B cell (primary cell): ENCODE measurements at regions of chr16 and their contacts with region 1.

Region 1: DNA sequence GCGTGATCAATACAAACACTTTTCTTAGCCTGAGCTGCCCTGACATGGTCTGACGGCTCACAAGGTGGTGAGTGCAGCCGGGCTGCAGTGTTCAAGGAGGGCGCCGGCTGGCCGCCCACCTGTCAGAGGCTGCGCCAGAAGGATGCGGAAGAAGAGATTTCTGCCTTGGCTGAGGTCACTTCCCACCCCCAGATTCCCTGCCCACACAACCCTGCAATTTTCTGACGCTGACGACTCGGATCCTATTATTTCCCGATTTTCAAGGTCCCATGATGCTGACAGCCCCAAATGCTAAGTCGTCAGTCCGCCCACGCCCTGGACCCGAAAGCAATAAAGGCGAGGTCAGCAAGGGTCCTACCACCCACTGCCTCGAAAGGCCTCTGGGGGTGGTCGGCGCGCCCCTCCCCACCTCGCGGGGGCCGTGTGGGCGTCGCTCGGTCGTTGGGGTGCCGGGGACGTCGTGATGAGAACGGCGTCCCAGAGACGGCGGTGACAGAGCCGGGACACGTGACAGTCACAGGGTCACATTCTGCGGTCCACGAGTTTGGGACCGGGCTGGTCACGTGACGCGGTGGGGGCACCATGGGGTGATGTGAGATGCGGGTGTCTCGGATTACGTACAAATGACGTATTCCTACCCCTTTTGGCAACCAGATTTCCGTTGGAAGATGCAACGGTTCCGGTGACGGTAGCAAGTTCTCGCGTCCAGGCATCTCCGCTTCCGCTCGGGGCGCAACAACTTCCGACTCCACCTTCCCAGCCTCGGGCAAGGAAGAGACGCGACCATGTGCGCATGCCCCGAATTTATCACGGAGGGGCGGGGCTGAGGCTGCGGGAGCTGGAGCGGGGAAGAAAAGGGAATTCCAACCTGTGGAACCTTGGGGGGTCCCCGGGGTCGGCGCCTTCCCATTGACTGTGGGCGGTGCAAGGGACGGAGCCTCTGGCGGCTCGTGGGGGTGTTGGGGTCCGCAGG is at the start of gene STX4:
- DNase-seq: peak; percentile 100
- ATAC-seq: peak; percentile 76
- H3K4me3 ChIP-seq: peak within 1 kb of the TSS; percentile 76 to 99 (median 90)
- H3K4me3 Mint-ChIP-seq: peak within 1 kb of the TSS; percentile 95
- H3K27ac ChIP-seq: peak within 1 kb of the TSS; percentile 99 to 100
- H3K27ac Mint-ChIP-seq: peak within 1 kb of the TSS; percentile 99
- H3K4me1 ChIP-seq: peaks cover 8 to 16% of the 10 kb centered on the region in 2 donors
- H3K4me1 Mint-ChIP-seq: peaks cover 21% of the 10 kb centered on the region
- H3K27me3 ChIP-seq: no peaks in the 10 kb centered on the region
- H3K27me3 Mint-ChIP-seq: no peaks in the 10 kb centered on the region
- CTCF ChIP-seq: no peak
- total RNA-seq, gene STX4: 111 and 120 TPM in 2 replicates

Region 2: GRCh38 chr16:30761928-30762810 is 270.9 kb before region 1 on chr16 and contains the starts of genes CFAP119 and RNF40:
- CTCF ChIA-PET with region 1: no interaction called
- POLR2A ChIA-PET with region 1: no interaction called
- intact Hi-C with region 1: loop called (anchors 5 kb)
- DNase-seq: peak; percentile 95
- ATAC-seq: peak; percentile 92
- H3K4me3 ChIP-seq: peak within 1 kb of the TSS; percentile 82 to 93 (median 90)
- H3K4me3 Mint-ChIP-seq: peak within 1 kb of the TSS; percentile 98
- H3K27ac ChIP-seq: peak within 1 kb of the TSS; percentile 57 to 91
- H3K27ac Mint-ChIP-seq: peak within 1 kb of the TSS; percentile 95
- H3K4me1 ChIP-seq: peaks cover 24 to 37% of the 10 kb centered on the region in 2 donors
- H3K4me1 Mint-ChIP-seq: peaks cover 36% of the 10 kb centered on the region
- H3K27me3 ChIP-seq: no peaks in the 10 kb centered on the region
- H3K27me3 Mint-ChIP-seq: no peaks in the 10 kb centered on the region
- CTCF ChIP-seq: no peak
- total RNA-seq, gene CFAP119: 9.3 and 11.7 TPM in 2 replicates
- total RNA-seq, gene RNF40: 120 and 121 TPM in 2 replicates

Region 3: DNA sequence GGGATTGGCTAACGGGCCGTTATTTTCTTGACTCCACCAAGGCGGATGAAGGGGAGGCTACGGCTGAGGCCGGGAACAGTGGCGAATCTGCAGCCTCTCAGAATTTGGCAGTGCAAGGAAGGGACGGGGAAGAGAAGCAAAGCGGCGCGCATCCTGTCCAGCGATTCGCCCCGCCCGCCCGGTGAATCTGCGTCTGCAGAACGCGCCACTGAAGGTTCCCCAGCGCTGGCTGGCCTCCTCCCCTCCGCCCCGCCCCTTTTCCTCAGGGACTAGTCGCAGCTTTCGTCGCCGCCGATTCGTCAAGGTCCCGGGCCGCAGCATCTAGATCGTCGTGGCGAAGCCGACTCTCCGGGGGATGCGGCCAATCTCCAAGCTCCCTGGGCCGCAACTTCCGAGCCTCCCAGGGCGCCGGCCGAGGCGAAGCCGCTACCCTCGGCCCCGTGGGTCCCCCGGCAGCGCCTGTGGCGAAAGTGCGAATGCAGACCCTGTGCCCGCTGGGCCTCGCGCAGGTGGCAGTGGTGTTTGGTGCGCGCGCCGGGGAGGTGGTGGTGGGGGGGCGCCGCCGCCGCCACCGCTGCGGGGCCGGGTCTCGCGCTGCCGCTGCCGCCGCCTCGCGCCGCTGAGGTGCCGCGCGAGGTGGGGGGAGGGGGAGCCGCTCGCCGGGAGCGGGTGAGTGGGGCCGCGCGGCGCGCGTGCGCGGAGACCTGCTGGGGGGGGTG is 75.4 kb before region 1 on chr16 and contains the start of gene SETD1A:
- CTCF ChIA-PET with region 1: no interaction called
- POLR2A ChIA-PET with region 1: no interaction called
- intact Hi-C with region 1: loop called (anchors 1 kb)
- DNase-seq: peak; percentile 99
- ATAC-seq: peak; percentile 83
- H3K4me3 ChIP-seq: peak within 1 kb of the TSS; percentile 85 to 99 (median 95)
- H3K4me3 Mint-ChIP-seq: peak within 1 kb of the TSS; percentile 97
- H3K27ac ChIP-seq: peak within 1 kb of the TSS; percentile 92 to 96
- H3K27ac Mint-ChIP-seq: peak within 1 kb of the TSS; percentile 99
- H3K4me1 ChIP-seq: peaks cover 15 to 25% of the 10 kb centered on the region in 2 donors
- H3K4me1 Mint-ChIP-seq: peaks cover 40% of the 10 kb centered on the region
- H3K27me3 ChIP-seq: no peaks in the 10 kb centered on the region
- H3K27me3 Mint-ChIP-seq: no peaks in the 10 kb centered on the region
- CTCF ChIP-seq: no peak
- total RNA-seq, gene SETD1A: 37.2 and 39.5 TPM in 2 replicates

Region 4: DNA sequence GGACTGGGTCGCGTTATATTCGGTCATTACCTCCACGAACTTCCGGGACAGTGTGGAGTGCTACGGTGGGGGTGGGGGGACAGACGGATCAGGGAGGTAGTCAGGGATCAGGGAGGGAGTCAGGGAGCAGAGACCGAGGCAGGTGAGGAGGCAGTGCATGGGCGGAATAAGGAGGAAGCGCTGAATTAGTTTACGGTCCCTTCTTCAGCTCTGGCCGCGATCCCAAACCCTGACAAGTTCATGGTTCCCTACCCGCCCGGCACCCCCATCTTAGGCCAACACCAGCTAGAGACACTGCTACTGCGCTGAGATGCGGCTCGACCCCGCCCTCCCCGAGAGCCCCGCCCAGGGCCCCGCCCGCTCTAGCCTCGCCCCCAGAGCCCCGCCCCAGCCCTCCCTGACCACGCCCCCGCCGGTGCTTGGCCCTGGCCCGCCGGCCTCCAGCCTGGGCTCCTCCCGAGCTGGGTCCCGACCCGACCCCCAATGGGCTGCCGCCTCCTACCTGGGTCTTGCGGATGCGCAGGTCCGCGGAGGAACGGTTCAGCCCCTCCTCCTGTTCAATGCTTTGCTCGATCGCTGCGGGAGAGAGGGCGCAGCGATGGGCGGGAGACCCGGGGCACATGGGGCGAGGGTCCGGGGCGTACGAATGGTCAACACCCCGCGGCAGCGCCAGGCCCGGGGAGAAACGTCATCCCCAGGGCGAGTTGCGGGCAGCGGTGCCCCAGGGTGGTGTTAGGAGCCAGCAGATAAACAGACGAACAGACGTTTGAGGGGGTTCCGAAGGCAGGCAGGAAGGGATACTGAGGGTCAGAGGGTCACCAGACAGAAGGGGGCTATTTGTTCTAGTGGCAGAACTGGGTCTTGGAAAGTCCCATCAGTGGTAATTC is 35.8 kb before region 1 on chr16:
- CTCF ChIA-PET with region 1: no interaction called
- POLR2A ChIA-PET with region 1: no interaction called
- intact Hi-C with region 1: loop called (anchors 1 kb)
- DNase-seq: peak; percentile 88
- ATAC-seq: peak; percentile 100
- H3K4me3 ChIP-seq: peak overlapping the region in 4 of 5 experiments; percentile 54 to 72 (median 66)
- H3K4me3 Mint-ChIP-seq: peak overlapping the region; percentile 91
- H3K27ac ChIP-seq: peak overlapping the region; percentile 29 to 62
- H3K27ac Mint-ChIP-seq: peak overlapping the region; percentile 92
- H3K4me1 ChIP-seq: peaks cover 9 to 13% of the 10 kb centered on the region in 2 donors
- H3K4me1 Mint-ChIP-seq: peaks cover 9% of the 10 kb centered on the region
- H3K27me3 ChIP-seq: peaks cover 0 to 7% (median 0%) of the 10 kb centered on the region in 4 experiments
- H3K27me3 Mint-ChIP-seq: no peaks in the 10 kb centered on the region
- CTCF ChIP-seq: no peak

Region 5: DNA sequence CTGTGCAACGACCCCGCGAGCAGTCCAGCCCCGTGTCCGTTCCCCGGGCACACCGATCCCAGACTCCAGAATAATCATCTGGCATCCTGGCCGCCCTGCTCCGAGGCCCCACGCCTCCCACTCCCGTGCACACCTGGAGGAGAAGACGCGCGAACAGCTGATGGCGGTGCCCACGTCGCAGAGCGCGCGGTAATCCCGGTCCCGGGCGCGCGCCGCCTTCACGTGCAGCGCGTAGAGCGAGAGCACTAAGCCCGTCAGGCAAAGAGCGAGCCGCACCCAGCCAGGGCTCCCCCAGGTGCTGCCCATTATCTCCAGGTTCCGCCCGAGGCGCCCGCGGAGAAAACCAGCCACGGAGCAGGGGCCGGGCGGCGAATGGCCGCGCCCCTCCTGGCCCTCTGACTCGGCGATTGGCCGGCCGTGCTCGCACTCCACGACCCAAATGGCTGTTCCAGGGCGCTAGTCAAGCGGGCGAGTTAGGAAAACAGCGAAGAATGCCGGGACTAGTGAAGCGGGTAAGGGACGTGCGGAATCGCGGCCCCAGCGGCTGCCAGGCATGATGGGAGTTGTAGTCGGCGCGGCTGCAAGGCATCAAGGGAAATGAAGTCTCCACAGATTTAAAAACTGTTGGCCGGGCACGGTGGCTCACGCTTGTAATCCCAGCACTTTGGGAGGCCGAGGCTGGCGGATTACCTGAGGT is 61.5 kb after region 1 on chr16 and contains the start of gene VKORC1:
- CTCF ChIA-PET with region 1: no interaction called
- POLR2A ChIA-PET with region 1: no interaction called
- intact Hi-C with region 1: loop called (anchors 1 kb)
- DNase-seq: peak; percentile 90
- ATAC-seq: peak; percentile 89
- H3K4me3 ChIP-seq: peak within 1 kb of the TSS; percentile 50 to 99 (median 73)
- H3K4me3 Mint-ChIP-seq: peak within 1 kb of the TSS; percentile 98
- H3K27ac ChIP-seq: peak within 1 kb of the TSS; percentile 81 to 85
- H3K27ac Mint-ChIP-seq: peak within 1 kb of the TSS; percentile 96
- H3K4me1 ChIP-seq: peaks cover 14 to 31% of the 10 kb centered on the region in 2 donors
- H3K4me1 Mint-ChIP-seq: peaks cover 29% of the 10 kb centered on the region
- H3K27me3 ChIP-seq: no peaks in the 10 kb centered on the region
- H3K27me3 Mint-ChIP-seq: no peaks in the 10 kb centered on the region
- CTCF ChIP-seq: no peak
- total RNA-seq, gene VKORC1: 36.8 and 45.7 TPM in 2 replicates

Region 6: GRCh38 chr16:31108035-31108793 is 75.2 kb after region 1 on chr16 and contains the start of gene BCKDK:
- CTCF ChIA-PET with region 1: no interaction called
- POLR2A ChIA-PET with region 1: interaction called, 4 read pairs
- intact Hi-C with region 1: loop called (anchors 2 kb)
- DNase-seq: peak; percentile 74
- ATAC-seq: peak; percentile 77
- H3K4me3 ChIP-seq: peak within 1 kb of the TSS; percentile 41 to 82 (median 78)
- H3K4me3 Mint-ChIP-seq: peak within 1 kb of the TSS; percentile 91
- H3K27ac ChIP-seq: peak within 1 kb of the TSS in 1 of 2 donors; percentile 72
- H3K27ac Mint-ChIP-seq: peak within 1 kb of the TSS; percentile 82
- H3K4me1 ChIP-seq: peaks cover 7 to 18% of the 10 kb centered on the region in 2 donors
- H3K4me1 Mint-ChIP-seq: peaks cover 21% of the 10 kb centered on the region
- H3K27me3 ChIP-seq: no peaks in the 10 kb centered on the region
- H3K27me3 Mint-ChIP-seq: no peaks in the 10 kb centered on the region
- CTCF ChIP-seq: no peak
- total RNA-seq, gene BCKDK: 24.7 and 29.7 TPM in 2 replicates